ENCODE measurements at regions of chr4 and their contacts with region 1.

Region 1: GRCh38 chr4:188627892-188628291 is 488.7 kb downstream of the TRIML1 start:
- DNase-seq: no peak
- H3K4me3 ChIP-seq: no peak overlapping the region
- H3K4me3 Mint-ChIP-seq: no peak overlapping the region
- H3K27ac Mint-ChIP-seq: no peak overlapping the region
- H3K4me1 ChIP-seq: no peaks in the 10 kb centered on the region
- H3K4me1 Mint-ChIP-seq: peaks cover 6% of the 10 kb centered on the region
- H3K27me3 ChIP-seq: no peaks in the 10 kb centered on the region
- H3K27me3 Mint-ChIP-seq: no peaks in the 10 kb centered on the region
- CTCF ChIP-seq: no peak

Region 2: DNA sequence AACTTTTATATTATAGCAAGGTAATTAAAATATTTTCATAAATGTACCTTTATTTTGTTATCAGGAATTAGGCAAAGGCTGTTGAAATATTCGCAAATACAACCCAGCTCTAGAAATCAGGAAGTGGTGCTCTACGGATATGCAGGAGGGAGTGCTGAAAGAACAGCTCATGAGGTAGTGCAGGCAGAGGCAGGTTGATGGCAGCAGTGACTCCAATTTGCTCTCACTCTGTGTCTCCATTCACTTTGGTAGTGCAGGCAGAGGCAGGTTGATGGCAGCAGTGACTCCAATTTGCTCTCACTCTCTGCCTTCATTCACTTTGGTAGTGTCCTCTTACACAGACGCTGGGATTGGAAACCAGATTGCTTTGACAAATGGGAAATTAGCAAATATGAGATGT is 210.7 kb before region 1 on chr4:
- CTCF ChIA-PET with region 1: no interaction called
- POLR2A ChIA-PET with region 1: no interaction called
- intact Hi-C with region 1: loop called (anchors 5 kb)
- DNase-seq: peak; percentile 39 to 50
- H3K4me3 ChIP-seq: no peak overlapping the region
- H3K4me3 Mint-ChIP-seq: no peak overlapping the region
- H3K27ac Mint-ChIP-seq: no peak overlapping the region
- H3K4me1 ChIP-seq: no peaks in the 10 kb centered on the region
- H3K4me1 Mint-ChIP-seq: no peaks in the 10 kb centered on the region
- H3K27me3 ChIP-seq: no peaks in the 10 kb centered on the region
- H3K27me3 Mint-ChIP-seq: no peaks in the 10 kb centered on the region
- CTCF ChIP-seq: peak; percentile 12 to 31

Region 3: GRCh38 chr4:188612659-188613058 is 15.2 kb before region 1 on chr4:
- CTCF ChIA-PET with region 1: no interaction called
- POLR2A ChIA-PET with region 1: no interaction called
- intact Hi-C with region 1: no loop called
- DNase-seq: no peak
- H3K4me3 ChIP-seq: no peak overlapping the region
- H3K4me3 Mint-ChIP-seq: no peak overlapping the region
- H3K27ac Mint-ChIP-seq: no peak overlapping the region
- H3K4me1 ChIP-seq: no peaks in the 10 kb centered on the region
- H3K4me1 Mint-ChIP-seq: no peaks in the 10 kb centered on the region
- H3K27me3 ChIP-seq: no peaks in the 10 kb centered on the region
- H3K27me3 Mint-ChIP-seq: no peaks in the 10 kb centered on the region
- CTCF ChIP-seq: no peak

Region 4: DNA sequence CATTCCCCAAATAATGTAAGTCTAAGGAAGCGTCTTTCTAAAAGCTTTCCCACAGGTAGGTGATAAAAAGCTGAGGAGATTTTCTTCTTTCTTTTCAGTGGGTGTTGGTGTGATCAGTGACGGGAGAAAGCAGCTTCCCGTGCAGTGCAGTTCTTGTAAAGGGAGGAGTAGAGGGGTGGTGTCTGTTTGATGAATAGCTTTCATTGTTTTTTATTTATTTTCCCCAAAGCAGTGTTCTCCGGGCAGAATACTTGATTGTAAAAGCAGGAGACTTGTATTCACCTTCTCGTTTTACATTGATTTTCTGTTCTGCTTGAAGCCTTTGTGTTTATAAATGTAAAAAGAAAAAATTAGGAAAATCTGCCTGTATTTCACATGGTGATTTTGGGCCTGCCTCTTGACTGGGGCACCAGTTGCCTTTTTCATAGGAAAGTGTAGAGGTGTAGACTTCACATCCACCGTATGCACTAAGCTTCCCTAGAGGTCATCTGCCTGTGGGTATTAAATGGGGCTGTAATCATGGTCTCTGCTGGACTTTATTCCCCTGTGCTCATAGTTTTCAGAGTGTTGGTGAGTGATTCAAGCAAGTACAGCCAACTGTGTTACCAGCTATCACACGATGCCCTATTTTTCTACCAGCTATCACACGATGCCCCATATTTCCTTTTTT is 37.7 kb after region 1 on chr4:
- CTCF ChIA-PET with region 1: no interaction called
- POLR2A ChIA-PET with region 1: no interaction called
- intact Hi-C with region 1: no loop called
- DNase-seq: no peak
- H3K4me3 ChIP-seq: no peak overlapping the region
- H3K4me3 Mint-ChIP-seq: no peak overlapping the region
- H3K27ac Mint-ChIP-seq: no peak overlapping the region
- H3K4me1 ChIP-seq: no peaks in the 10 kb centered on the region
- H3K4me1 Mint-ChIP-seq: no peaks in the 10 kb centered on the region
- H3K27me3 ChIP-seq: no peaks in the 10 kb centered on the region
- H3K27me3 Mint-ChIP-seq: no peaks in the 10 kb centered on the region
- CTCF ChIP-seq: no peak